Activated CD8-positive, alpha-beta T cell treated with anti-CD3 and anti-CD28 coated beads, Interleukin-2, amount 10 ng/mL, durations not matched to agents 7 days and 5 days (primary cell): ENCODE measurements at regions of chr11 and their contacts with region 1.

Region 1: DNA sequence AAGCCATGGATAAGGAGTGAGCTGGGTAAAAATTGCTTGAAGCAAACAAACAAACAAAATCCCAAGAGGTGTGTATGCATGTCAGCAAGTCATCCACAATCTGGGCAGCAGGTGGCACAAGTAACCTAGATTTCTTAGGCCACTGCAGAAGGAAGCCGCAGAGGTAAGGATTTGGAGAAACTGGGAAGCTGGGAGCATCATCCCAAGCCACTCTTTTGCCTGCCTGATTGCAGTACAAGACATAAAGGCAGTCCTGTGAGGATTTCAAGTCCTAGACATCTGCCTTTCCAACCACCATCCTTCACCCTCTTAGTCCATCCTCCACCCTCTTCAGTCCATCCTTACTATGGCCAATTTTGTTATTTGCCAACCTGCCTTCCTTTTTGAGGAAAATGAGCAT is 67.2 kb upstream of the BMAL1 start:
- DNase-seq: peak; percentile 57
- ATAC-seq: no peak
- H3K4me3 Mint-ChIP-seq: no peak overlapping the region
- H3K27ac Mint-ChIP-seq: no peak overlapping the region
- H3K4me1 Mint-ChIP-seq: peaks cover 30% of the 10 kb centered on the region
- H3K27me3 Mint-ChIP-seq: peaks cover 8% of the 10 kb centered on the region

Region 2: DNA sequence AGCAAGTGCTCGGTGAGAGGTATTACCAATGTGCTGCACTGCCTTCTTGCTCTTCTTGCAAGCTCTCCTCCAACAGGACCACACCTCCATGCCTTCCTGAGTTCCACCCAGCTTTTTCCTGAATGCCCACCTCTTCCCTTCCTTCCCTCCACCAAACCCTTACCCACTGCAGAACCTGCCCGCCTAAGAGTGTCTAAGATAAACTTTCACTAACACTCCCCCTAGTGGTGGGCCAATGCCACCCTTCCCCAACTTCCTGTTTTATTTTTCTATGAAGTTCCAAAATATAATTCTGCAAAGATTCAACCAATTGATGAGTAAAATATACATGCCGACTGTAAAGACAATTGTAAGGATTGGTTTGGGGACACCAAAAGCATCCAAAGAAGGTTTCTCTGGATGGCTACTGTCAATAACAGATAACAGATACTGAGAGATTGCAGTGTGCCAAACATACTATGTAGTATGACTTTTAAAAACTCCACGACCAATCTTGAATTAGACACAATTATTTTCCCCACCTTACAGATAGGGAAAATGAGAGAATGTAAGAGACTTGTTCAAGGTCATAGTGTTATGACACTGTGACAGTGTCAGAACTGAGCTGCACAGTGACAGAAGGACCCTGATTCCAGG is 28.6 kb after region 1 on chr11:
- CTCF ChIA-PET with region 1: interaction called, 16 read pairs
- POLR2A ChIA-PET with region 1: no interaction called
- DNase-seq: peak; percentile 70
- ATAC-seq: peak; percentile 87
- H3K4me3 Mint-ChIP-seq: no peak overlapping the region
- H3K27ac Mint-ChIP-seq: no peak overlapping the region
- H3K4me1 Mint-ChIP-seq: no peaks in the 10 kb centered on the region
- H3K27me3 Mint-ChIP-seq: peaks cover 25% of the 10 kb centered on the region

Region 3: DNA sequence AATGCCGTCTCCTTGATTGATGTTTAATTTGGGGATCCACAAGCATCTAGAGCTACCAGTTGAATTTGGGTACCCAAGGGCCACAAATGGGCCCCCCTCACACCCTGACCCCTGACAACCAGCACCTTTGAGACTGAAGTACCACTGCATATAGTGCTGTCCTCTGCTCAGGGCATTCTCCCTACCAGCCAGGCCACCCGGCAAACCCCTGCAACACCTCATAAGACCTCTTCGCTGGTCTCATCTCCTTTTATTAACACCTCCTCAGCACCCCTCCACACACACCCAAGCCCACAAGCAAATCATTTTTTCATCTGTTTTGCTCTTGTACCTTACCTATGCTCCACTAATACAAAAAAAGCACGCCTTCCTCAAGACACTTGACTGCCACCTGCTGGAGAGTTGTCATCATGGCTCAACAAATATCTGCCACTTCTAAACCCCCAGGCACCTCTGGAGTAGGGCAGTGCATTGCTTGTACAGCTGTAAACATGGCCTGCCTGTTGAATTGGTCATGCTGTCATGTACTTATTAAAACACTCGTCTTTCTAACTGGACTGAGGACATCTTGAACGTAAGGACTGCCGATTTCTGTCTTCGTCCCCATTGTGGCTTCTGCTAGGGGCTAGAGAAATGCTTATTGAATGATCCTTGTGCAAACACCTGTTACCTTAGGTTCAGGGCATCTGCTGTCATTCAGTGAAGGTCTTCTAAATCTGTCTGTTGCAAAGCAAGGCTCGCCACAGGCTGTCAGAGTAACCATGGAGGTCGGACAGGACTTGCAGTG is 133.7 kb after region 1 on chr11:
- CTCF ChIA-PET with region 1: interaction called, 51 read pairs
- POLR2A ChIA-PET with region 1: interaction called, 3 read pairs
- DNase-seq: peak; percentile 86
- ATAC-seq: peak; percentile 68
- H3K4me3 Mint-ChIP-seq: no peak overlapping the region
- H3K27ac Mint-ChIP-seq: no peak overlapping the region
- H3K4me1 Mint-ChIP-seq: peaks cover 42% of the 10 kb centered on the region
- H3K27me3 Mint-ChIP-seq: no peaks in the 10 kb centered on the region